Endothelial cell of umbilical vein (primary cell): ENCODE measurements at regions of chr7 and their contacts with region 1.

Region 1: DNA sequence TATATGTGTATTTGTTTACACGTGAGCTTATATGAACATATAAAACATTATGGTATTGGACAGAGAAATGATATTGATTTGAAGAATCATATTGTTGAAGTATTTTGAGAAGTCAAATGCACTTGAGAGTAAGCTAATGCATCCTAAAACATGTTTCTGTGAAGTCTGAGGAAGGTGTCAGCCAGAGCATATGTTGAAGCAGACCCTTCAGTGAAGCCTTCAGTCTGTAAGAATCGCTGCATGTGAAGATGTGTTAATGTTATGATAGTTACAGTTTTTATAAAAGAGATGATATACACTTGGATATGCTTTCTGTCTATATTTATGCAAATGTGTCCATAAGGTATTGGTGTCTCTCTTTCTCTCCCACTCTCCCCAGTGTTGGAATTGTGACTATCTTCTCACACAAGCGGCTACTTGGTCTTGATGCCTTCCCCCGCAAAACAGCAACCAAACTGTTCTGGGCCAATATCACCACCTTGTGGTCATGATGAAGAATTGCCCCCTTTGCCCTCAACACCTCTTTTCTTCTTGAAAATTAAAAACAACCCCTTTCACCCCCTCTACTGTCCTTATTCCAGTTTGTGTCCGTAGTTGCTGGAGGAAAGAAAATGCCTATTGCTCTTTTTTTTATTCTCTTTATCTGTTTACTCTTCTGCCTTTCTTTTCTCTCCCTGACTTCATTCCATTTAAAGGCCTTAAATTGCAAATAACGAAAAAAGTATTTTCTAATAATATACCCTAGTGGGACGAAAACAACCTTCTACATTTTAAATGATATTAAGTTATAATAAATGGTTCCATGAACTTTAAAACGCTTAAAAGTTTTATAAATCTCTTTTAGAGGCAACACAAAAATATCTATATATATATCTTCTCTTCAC is 64.9 kb downstream of the IKZF1 start:
- DNase-seq: peak; percentile 8
- H3K4me3 ChIP-seq: no peak overlapping the region
- H3K27ac ChIP-seq: no peak overlapping the region
- H3K4me1 ChIP-seq: no peaks in the 10 kb centered on the region
- H3K27me3 ChIP-seq: peaks cover 0 to 2% of the 10 kb centered on the region in 2 experiments
- CTCF ChIP-seq: peak; percentile 27 to 34
- POLR2A ChIP-seq: no peak

Region 2: DNA sequence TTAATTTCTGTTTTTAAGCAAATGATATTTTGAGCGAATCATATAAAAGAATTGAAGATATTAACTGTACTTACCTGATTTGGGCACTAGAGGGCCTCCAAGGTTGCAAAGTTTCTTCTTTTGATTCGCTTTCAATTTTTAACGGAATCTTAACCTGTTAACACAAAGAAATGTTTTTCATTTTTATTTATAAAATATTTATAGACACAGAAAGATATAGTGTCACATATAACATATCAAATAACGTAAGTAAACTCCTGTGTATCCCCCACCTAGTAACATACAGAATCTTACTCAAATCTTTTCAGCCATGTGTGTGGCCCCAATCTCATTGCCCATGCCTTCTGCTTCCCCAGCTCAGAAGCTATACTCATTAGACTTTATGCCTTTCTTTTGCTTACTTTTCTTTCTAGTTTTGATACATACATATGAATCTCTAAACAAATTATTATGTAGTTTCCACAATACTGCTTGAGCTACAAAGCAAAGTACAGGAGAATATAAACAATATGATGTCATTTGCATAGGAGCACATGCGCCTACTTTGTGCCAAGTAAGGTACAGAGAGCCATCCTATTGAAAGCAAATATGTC is 226.9 kb before region 1 on chr7:
- CTCF ChIA-PET with region 1: no interaction called
- POLR2A ChIA-PET with region 1: no interaction called
- dilution Hi-C with region 1: no loop called
- intact Hi-C with region 1: loop called (anchors 2 kb)
- DNase-seq: peak; percentile 44
- H3K4me3 ChIP-seq: no peak overlapping the region
- H3K27ac ChIP-seq: no peak overlapping the region
- H3K4me1 ChIP-seq: no peaks in the 10 kb centered on the region
- H3K27me3 ChIP-seq: no peaks in the 10 kb centered on the region
- CTCF ChIP-seq: peak; percentile 26 to 49
- POLR2A ChIP-seq: no peak

Region 3: GRCh38 chr7:50206453-50207250 is 162.7 kb before region 1 on chr7:
- CTCF ChIA-PET with region 1: no interaction called
- POLR2A ChIA-PET with region 1: no interaction called
- dilution Hi-C with region 1: no loop called
- intact Hi-C with region 1: loop called (anchors 1 kb)
- DNase-seq: no peak
- H3K4me3 ChIP-seq: no peak overlapping the region
- H3K27ac ChIP-seq: no peak overlapping the region
- H3K4me1 ChIP-seq: no peaks in the 10 kb centered on the region
- H3K27me3 ChIP-seq: no peaks in the 10 kb centered on the region
- CTCF ChIP-seq: no peak
- POLR2A ChIP-seq: no peak

Region 4: GRCh38 chr7:50304158-50304910 is 65.1 kb before region 1 on chr7 and contains the start of gene IKZF1:
- CTCF ChIA-PET with region 1: no interaction called
- POLR2A ChIA-PET with region 1: no interaction called
- dilution Hi-C with region 1: no loop called
- intact Hi-C with region 1: loop called (anchors 10 kb)
- DNase-seq: no peak
- H3K4me3 ChIP-seq: peak within 1 kb of the TSS in 1 of 3 experiments; percentile 23
- H3K27ac ChIP-seq: no peak within 1 kb of the TSS
- H3K4me1 ChIP-seq: no peaks in the 10 kb centered on the region
- H3K27me3 ChIP-seq: peaks cover 37 to 55% of the 10 kb centered on the region in 2 experiments
- CTCF ChIP-seq: no peak
- POLR2A ChIP-seq: no peak
- total RNA-seq, gene IKZF1: 0.20 TPM in 1 of 2 replicates, not detected in the other

Region 5: GRCh38 chr7:50356212-50356944 is 13.0 kb before region 1 on chr7:
- CTCF ChIA-PET with region 1: no interaction called
- POLR2A ChIA-PET with region 1: no interaction called
- dilution Hi-C with region 1: no loop called
- intact Hi-C with region 1: no loop called
- DNase-seq: no peak
- H3K4me3 ChIP-seq: no peak overlapping the region
- H3K27ac ChIP-seq: no peak overlapping the region
- H3K4me1 ChIP-seq: no peaks in the 10 kb centered on the region
- H3K27me3 ChIP-seq: no peaks in the 10 kb centered on the region
- CTCF ChIP-seq: no peak
- POLR2A ChIP-seq: no peak